Endothelial cell of umbilical vein (primary cell): ENCODE measurements at regions of chr3 and their contacts with region 1.

Region 1: GRCh38 chr3:16177962-16178627 is 3.6 kb downstream of the GALNT15 start:
- DNase-seq: peak; percentile 74
- H3K4me3 ChIP-seq: no peak overlapping the region
- H3K27ac ChIP-seq: no peak overlapping the region
- H3K4me1 ChIP-seq: peaks cover 11% of the 10 kb centered on the region
- H3K27me3 ChIP-seq: peaks cover 0 to 2% of the 10 kb centered on the region in 2 experiments
- CTCF ChIP-seq: peak; percentile 98 to 100
- POLR2A ChIP-seq: peak; percentile 14

Region 2: GRCh38 chr3:15815696-15816095 is 362.4 kb before region 1 on chr3:
- CTCF ChIA-PET with region 1: interaction called, 10 read pairs
- POLR2A ChIA-PET with region 1: no interaction called
- dilution Hi-C with region 1: no loop called
- intact Hi-C with region 1: loop called (anchors 1 kb)
- DNase-seq: peak; percentile 61
- H3K4me3 ChIP-seq: no peak overlapping the region
- H3K27ac ChIP-seq: no peak overlapping the region
- H3K4me1 ChIP-seq: no peaks in the 10 kb centered on the region
- H3K27me3 ChIP-seq: no peaks in the 10 kb centered on the region
- CTCF ChIP-seq: peak; percentile 5 to 21
- POLR2A ChIP-seq: no peak

Region 3: GRCh38 chr3:16090024-16090423 is 88.1 kb before region 1 on chr3:
- CTCF ChIA-PET with region 1: interaction called, 16 read pairs
- POLR2A ChIA-PET with region 1: no interaction called
- dilution Hi-C with region 1: no loop called
- intact Hi-C with region 1: loop called (anchors 1 kb)
- DNase-seq: peak; percentile 80
- H3K4me3 ChIP-seq: no peak overlapping the region
- H3K27ac ChIP-seq: no peak overlapping the region
- H3K4me1 ChIP-seq: peaks cover 23% of the 10 kb centered on the region
- H3K27me3 ChIP-seq: no peaks in the 10 kb centered on the region
- CTCF ChIP-seq: no peak
- POLR2A ChIP-seq: no peak

Region 4: GRCh38 chr3:16148783-16149182 is 29.3 kb before region 1 on chr3:
- CTCF ChIA-PET with region 1: interaction called, 14 read pairs
- POLR2A ChIA-PET with region 1: no interaction called
- dilution Hi-C with region 1: no loop called
- intact Hi-C with region 1: no loop called
- DNase-seq: peak; percentile 95
- H3K4me3 ChIP-seq: no peak overlapping the region
- H3K27ac ChIP-seq: peak overlapping the region; percentile 31
- H3K4me1 ChIP-seq: peaks cover 10% of the 10 kb centered on the region
- H3K27me3 ChIP-seq: peaks cover 0 to 3% of the 10 kb centered on the region in 2 experiments
- CTCF ChIP-seq: no peak
- POLR2A ChIP-seq: no peak

Region 5: DNA sequence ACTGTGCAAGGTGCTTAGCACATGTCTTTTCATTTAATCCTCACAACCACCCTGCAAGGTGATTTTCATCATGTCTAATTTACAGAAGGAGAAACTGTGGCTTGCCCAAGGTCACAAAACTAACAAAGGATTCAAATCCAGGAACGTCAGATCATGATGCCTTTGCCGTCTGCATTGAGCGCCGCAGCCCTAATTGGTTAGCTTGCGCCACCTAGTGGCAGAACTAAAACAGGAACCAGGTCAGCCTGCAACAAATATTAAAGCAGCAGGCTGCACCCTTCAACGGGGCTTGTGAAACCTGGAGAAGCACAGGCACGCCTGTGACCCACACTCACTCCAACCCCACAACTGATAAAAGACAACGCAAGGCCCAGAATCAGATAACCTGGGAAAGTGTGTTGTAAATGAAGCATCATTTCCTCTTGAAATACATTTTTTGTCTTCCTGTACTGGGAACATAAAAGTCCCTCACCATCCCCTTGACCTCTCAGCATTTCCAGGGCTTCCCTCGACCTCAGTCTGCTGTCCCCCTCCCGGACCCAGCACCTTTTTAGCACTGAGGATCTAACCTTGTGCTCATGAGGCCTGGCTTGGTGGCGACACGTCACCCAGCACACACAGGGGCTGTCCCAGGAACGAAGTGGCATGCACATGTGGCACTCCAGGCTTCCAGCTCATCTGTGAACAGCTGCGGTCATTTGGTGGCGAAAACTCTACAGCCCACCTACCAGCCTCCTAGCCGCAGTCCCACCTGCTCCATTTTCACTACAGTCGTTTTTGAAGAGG is 69.4 kb after region 1 on chr3:
- CTCF ChIA-PET with region 1: interaction called, 16 read pairs
- POLR2A ChIA-PET with region 1: no interaction called
- dilution Hi-C with region 1: no loop called
- intact Hi-C with region 1: loop called (anchors 1 kb)
- DNase-seq: peak; percentile 72
- H3K4me3 ChIP-seq: no peak overlapping the region
- H3K27ac ChIP-seq: no peak overlapping the region
- H3K4me1 ChIP-seq: peaks cover 11% of the 10 kb centered on the region
- H3K27me3 ChIP-seq: no peaks in the 10 kb centered on the region
- CTCF ChIP-seq: peak; percentile 86 to 87
- POLR2A ChIP-seq: no peak